ENCODE measurements at regions of chr5 and their contacts with region 1.

Region 1: GRCh38 chr5:104800436-104801048 is 1238.0 kb upstream of the NUDT12 start:
- DNase-seq: no peak
- ATAC-seq: no peak
- H3K4me3 ChIP-seq: no peak overlapping the region
- H3K27ac ChIP-seq: no peak overlapping the region
- H3K4me1 ChIP-seq: no peaks in the 10 kb centered on the region
- H3K27me3 ChIP-seq: no peaks in the 10 kb centered on the region
- CTCF ChIP-seq: 0 out of 2 replicates have a peak, but pooled peaks have one; percentile 11
- POLR2A ChIP-seq: no peak
- RAD21 ChIP-seq: no peak

Region 2: DNA sequence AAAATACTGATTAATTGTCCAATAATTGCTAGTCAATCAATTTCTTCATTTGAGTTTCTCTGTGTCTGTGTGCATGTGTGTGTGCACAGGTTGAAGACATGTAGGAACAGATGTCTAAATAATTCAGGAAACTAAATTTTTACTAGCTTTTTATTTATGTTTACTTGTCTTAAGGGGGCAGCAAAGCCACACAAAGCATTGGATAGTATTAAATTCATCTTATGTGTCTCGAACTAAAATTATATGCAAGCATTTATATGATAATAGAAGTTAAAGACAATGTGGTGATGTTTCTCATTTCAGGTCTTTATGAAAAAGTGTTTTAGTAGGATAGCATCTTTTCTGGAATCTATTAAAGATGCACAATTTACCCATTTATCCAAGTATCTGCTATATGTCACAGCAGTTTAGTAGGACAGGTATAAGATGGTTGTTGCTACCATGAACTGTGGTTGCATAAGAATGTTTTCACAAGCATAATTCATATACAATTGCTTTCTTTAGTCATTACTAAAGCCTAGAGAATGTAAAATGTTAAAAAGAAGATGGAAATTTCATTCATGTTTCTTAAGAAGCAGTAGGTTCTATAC is 453.3 kb before region 1 on chr5:
- CTCF ChIA-PET with region 1: no interaction called
- POLR2A ChIA-PET with region 1: no interaction called
- dilution Hi-C with region 1: no loop called
- in situ Hi-C with region 1: no loop called
- intact Hi-C with region 1: loop called (anchors 1 kb)
- DNase-seq: peak; percentile 38
- ATAC-seq: peak; percentile 48; the same call in 1 of the 2 replicates
- H3K4me3 ChIP-seq: no peak overlapping the region
- H3K27ac ChIP-seq: no peak overlapping the region
- H3K4me1 ChIP-seq: no peaks in the 10 kb centered on the region
- H3K27me3 ChIP-seq: no peaks in the 10 kb centered on the region
- CTCF ChIP-seq: peak; percentile 47
- POLR2A ChIP-seq: no peak
- RAD21 ChIP-seq: peak; percentile 56